ENCODE measurements at regions of chr10 and their contacts with region 1.

Region 1: GRCh38 chr10:84537447-84537931 is 209.1 kb downstream of the CCSER2 start:
- DNase-seq: peak; percentile 48
- H3K4me3 Mint-ChIP-seq: no peak overlapping the region
- H3K27ac Mint-ChIP-seq: no peak overlapping the region
- H3K4me1 Mint-ChIP-seq: peaks cover 31% of the 10 kb centered on the region
- H3K27me3 Mint-ChIP-seq: peaks cover 16% of the 10 kb centered on the region

Region 2: GRCh38 chr10:84256510-84257342 is 280.8 kb before region 1 on chr10:
- CTCF ChIA-PET with region 1: interaction called, 336 read pairs
- POLR2A ChIA-PET with region 1: no interaction called
- intact Hi-C with region 1: no loop called
- DNase-seq: peak; percentile 71
- H3K4me3 Mint-ChIP-seq: no peak overlapping the region
- H3K27ac Mint-ChIP-seq: no peak overlapping the region
- H3K4me1 Mint-ChIP-seq: peaks cover 2% of the 10 kb centered on the region
- H3K27me3 Mint-ChIP-seq: peaks cover 9% of the 10 kb centered on the region

Region 3: DNA sequence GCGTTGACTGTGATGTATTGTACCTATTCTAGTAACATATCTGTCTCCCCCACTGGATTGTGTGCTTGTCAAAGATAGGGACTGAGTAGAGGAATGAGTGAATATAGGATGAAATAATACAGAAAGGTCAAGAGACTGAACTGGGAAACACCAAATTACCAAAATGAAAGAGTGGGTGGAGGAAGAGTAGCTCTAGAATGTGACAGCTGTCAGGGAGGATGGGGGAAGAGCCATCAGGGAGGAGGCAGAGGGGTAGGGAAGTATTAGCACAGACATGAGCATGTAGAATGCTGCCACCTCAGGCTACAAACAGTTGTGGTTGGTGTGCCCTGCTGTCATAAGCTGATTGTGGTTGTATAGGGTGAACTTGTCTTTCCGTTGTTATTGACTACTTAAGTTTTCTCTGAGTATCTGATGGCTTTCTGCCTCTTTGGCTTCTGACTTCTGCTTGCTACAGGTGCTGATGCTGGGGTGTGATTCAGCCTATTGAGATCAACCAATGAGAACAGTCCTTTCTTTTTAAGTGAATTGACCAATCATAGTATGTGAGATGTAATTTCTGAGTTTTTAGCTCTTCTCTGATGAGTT is 203.5 kb before region 1 on chr10:
- CTCF ChIA-PET with region 1: interaction called, 16 read pairs
- POLR2A ChIA-PET with region 1: interaction called, 4 read pairs
- intact Hi-C with region 1: loop called (anchors 1 kb)
- DNase-seq: peak; percentile 82
- H3K4me3 Mint-ChIP-seq: peak overlapping the region; percentile 36
- H3K27ac Mint-ChIP-seq: peak overlapping the region; percentile 78
- H3K4me1 Mint-ChIP-seq: peaks cover 40% of the 10 kb centered on the region
- H3K27me3 Mint-ChIP-seq: no peaks in the 10 kb centered on the region

Region 4: DNA sequence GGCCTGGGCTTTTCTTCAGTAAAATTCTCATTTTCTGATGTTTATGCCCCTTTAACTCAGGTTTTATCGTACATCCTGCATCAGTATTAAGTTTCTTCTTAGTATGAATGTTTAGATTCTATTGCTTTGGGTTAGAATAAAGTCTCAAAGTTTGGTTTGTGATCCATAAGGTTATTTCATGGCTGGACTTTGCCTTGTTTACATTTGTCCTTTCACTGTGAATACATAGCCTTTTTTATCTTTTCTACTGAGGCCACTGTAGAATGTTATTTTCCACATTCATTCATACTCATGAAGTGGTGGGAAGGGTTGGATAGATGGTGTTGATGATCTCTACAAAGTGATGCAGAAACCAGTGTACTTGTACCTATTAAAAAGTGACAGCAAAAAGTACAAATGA is 149.3 kb before region 1 on chr10:
- CTCF ChIA-PET with region 1: interaction called, 10 read pairs
- POLR2A ChIA-PET with region 1: no interaction called
- intact Hi-C with region 1: no loop called
- DNase-seq: no peak
- H3K4me3 Mint-ChIP-seq: no peak overlapping the region
- H3K27ac Mint-ChIP-seq: no peak overlapping the region
- H3K4me1 Mint-ChIP-seq: peaks cover 34% of the 10 kb centered on the region
- H3K27me3 Mint-ChIP-seq: no peaks in the 10 kb centered on the region

Region 5: DNA sequence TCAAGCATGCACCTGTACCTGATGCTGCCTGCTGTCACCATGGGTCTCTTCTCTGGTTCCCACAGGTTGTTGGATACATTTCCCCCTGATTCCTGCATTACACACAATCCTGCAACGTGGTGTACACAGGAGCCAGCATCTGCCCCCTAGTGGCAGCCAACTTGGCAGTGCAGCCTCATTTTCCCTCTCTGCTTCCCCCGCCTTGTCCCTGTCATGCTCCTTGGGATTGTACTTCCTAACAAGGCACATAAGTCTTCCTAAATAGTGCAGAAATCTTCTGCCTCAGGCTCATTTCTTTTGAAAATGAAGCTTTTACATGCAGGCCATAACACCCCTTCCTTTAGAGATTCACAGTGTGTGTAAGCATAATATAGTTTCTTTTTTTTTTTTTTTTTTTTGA is 178.4 kb after region 1 on chr10:
- CTCF ChIA-PET with region 1: interaction called, 4 read pairs
- POLR2A ChIA-PET with region 1: no interaction called
- intact Hi-C with region 1: loop called (anchors 2 kb)
- DNase-seq: peak; percentile 16
- H3K4me3 Mint-ChIP-seq: no peak overlapping the region
- H3K27ac Mint-ChIP-seq: no peak overlapping the region
- H3K4me1 Mint-ChIP-seq: no peaks in the 10 kb centered on the region
- H3K27me3 Mint-ChIP-seq: peaks cover 10% of the 10 kb centered on the region